Activated naive CD4-positive, alpha-beta T cell treated with anti-CD3 and anti-CD28 coated beads for 36 hours (primary cell): ENCODE measurements at regions of chr9 and their contacts with region 1.

Region 1: GRCh38 chr9:126704873-126705766 is 91.4 kb downstream of the LMX1B start:
- DNase-seq: peak; percentile 91
- H3K4me3 Mint-ChIP-seq: peak overlapping the region; percentile 58
- H3K27ac Mint-ChIP-seq: no peak overlapping the region
- H3K4me1 Mint-ChIP-seq: peaks cover 14% of the 10 kb centered on the region
- H3K27me3 Mint-ChIP-seq: peaks cover 17% of the 10 kb centered on the region

Region 2: DNA sequence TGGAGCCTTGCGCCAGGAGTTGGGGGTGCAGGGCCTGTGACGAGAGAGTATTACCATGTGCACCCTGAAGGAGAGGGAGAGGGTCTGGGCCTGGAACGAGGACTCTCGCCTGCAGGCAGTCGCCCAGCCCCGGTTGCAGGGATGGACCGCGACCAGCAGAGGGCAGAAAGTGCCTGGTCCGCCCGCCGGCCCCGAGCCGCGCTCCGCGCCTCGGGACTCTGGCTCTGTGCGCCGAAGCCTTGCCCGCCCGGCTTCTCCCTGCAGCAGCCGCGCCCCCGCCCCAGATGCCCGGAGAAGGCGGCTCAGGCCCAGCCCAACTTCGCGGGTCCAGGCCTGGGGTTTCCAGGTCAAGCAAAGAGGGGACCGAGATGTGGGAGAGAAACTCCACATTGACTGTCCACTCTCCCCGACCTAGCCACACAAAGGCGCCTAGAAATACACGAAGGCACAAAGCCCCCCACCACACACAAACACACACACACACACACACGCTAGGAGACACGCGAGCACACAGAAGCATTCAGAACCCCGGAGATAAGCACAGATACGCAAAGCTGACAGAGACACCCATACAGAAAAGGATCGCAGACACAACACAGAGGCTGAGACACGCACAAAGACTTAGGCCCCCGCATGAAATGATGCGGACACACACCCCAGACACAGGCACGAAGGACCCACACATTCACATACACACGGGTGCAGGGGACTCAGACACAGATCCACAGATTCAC is 93.4 kb before region 1 on chr9:
- CTCF ChIA-PET with region 1: interaction called, 5 read pairs
- intact Hi-C with region 1: loop called (anchors 1 kb)
- DNase-seq: peak; percentile 81
- H3K4me3 Mint-ChIP-seq: peak overlapping the region; percentile 5
- H3K27ac Mint-ChIP-seq: no peak overlapping the region
- H3K4me1 Mint-ChIP-seq: peaks cover 22% of the 10 kb centered on the region
- H3K27me3 Mint-ChIP-seq: peaks cover 66% of the 10 kb centered on the region

Region 3: DNA sequence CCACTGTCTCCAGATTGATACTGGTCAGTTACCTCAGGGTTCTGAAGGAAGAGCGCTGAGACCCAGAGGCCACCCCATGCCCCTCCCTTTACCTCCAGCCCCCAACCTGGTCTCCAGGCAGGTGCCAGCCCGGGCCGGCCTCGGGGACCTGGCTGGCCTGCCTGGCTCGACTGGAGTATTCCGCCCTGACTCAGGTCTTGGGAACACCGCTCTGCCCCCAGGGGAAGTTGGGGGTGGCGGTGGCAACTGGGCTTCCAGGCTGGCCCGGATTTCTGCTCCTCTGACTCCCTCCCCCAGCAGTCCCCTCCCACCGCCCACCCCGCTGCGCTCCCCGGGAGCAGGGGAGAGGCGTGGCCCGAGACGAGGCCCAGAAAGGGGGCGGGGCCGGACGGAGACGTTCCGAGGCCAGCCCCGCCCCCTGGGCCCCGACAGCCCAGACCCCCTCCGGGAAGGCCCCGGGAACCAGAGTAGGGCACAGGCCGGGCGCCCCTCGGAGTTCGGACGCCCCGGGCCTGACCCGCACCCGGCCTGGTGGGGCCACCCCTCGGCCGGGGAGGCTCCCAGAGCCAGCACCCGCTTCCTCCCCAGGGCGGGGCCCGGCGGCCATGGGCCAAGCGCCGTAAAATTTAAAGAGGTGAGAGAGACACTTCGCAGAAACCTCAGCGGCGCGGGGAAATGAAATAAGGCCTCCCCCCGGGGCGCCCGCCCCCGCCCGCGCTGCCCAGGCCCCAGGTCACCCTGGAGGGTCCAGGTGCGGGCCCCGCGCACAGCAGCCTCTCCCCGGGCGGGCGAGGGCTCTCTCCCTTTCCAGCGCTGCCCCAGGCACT is 17.3 kb after region 1 on chr9:
- CTCF ChIA-PET with region 1: interaction called, 27 read pairs
- intact Hi-C with region 1: loop called (anchors 1 kb)
- DNase-seq: peak; percentile 93
- H3K4me3 Mint-ChIP-seq: peak overlapping the region; percentile 84
- H3K27ac Mint-ChIP-seq: peak overlapping the region; percentile 82
- H3K4me1 Mint-ChIP-seq: peaks cover 35% of the 10 kb centered on the region
- H3K27me3 Mint-ChIP-seq: no peaks in the 10 kb centered on the region

Region 4: DNA sequence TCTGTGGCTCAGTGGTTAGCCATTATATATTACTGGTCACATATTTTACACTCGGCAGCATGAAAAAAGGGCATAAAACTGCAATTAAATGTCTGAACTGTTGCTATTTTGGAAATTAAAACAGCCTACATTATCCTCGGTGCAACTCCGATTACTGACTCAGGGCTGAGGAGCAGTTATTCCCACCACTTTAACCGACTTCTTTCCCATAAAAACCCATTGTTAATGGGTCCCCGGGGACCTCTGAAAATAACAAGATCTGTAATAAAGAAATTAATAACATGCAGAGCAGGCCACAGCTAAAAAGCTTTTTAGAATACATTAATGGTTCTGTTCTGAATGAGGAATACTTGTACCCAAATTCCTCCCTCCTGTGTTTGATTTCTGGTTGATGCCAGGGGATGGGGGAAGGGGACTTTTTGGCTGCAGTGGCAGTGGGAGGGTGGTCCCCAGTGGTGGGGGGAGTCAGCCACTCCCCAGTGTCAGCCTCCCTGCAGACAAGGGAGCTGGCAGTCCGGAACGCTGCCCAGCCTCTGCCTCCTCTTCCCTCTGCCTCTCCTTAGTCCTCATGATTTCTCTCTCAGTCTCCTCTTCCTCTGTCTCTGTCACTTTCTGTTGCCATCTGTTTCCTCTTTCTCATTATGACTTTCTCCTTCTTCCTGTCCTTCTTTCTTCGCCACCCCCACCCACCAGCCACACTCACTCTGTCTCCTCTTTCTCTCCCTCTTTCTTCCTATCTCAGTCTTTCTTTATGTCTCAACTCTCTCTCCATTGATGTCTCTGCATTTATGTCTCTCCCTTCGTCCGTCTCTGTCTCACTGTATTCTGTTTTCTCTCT is 40.7 kb after region 1 on chr9:
- CTCF ChIA-PET with region 1: interaction called, 28 read pairs
- intact Hi-C with region 1: loop called (anchors 5 kb)
- DNase-seq: peak; percentile 45
- H3K4me3 Mint-ChIP-seq: no peak overlapping the region
- H3K27ac Mint-ChIP-seq: peak overlapping the region; percentile 28
- H3K4me1 Mint-ChIP-seq: peaks cover 29% of the 10 kb centered on the region
- H3K27me3 Mint-ChIP-seq: no peaks in the 10 kb centered on the region

Region 5: DNA sequence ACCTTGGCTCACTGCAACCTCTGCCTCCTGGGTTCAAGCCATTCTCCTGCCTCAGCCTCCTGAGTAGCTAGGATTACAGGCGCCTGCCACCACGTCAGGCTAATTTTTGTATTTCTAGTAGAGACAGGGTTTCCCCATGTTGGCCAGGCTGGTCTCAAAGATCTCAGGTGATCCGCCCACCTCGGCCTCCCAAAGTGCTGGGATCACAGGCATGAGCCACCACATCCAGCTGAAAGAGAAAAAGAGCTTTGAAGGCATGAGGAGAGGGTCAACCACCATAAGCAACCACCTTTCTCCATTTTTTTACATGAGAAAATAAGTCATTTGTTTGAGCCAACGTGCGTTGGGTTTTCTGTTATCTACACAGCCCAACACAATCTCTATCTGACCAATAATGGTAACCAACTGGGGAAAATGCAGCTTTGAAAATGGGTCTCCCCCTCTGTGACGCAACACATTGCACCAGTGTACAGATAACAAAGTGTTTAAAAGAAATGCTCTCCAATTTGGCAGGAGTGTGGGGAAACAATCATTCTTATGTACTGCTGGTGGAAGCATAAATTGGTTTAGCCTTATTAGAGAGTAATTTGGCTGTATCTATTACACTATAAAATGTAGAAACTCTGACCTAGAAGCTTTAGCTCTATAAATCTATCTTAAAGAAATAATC is 53.9 kb after region 1 on chr9:
- CTCF ChIA-PET with region 1: interaction called, 13 read pairs
- intact Hi-C with region 1: no loop called
- DNase-seq: no peak
- H3K4me3 Mint-ChIP-seq: no peak overlapping the region
- H3K27ac Mint-ChIP-seq: no peak overlapping the region
- H3K4me1 Mint-ChIP-seq: no peaks in the 10 kb centered on the region
- H3K27me3 Mint-ChIP-seq: no peaks in the 10 kb centered on the region

Region 6: DNA sequence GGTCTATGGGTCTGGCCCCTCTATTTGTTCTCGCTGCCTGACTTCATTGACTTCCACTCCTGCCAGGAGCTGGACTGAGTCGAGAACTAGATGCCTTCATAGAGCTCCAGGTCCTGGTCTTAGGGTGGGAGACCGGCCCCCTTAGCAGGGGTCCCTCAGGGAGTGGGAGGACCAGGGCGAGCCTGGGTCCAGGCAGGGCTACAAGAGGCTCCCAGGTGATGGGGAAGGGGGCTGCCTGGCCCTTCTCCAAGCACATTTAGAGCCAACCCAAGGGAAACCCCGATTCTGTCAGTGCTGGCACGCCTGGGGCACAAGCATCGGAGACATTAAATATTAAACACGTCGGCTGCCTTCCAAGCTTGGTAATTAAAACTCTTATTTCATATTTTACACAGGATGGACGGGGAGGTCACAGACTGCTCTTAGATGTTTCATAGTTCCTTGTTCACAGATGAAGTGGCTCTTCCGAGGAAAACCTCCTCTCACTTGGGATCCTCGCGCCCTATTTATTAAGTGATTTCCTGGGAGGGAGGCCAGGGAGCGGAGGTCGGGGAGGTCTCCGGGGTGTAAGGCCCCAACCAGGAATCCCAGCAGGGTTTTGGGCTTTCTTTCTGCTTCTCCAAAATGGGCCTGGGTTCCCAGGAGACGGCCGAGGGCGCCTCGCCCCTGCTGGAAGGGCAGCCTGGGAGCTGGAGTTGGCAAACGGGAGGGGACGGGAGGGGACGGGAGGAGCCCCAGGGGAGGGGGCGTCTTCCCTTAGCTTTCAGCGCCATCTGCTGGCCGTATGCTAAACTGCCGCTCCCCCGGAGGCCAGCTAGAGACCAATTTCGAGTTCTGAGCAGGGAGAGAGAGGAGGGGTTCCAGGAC is 76.3 kb after region 1 on chr9:
- CTCF ChIA-PET with region 1: interaction called, 296 read pairs
- intact Hi-C with region 1: loop called (anchors 1 kb)
- DNase-seq: peak; percentile 87
- H3K4me3 Mint-ChIP-seq: no peak overlapping the region
- H3K27ac Mint-ChIP-seq: no peak overlapping the region
- H3K4me1 Mint-ChIP-seq: no peaks in the 10 kb centered on the region
- H3K27me3 Mint-ChIP-seq: peaks cover 13% of the 10 kb centered on the region

Region 7: DNA sequence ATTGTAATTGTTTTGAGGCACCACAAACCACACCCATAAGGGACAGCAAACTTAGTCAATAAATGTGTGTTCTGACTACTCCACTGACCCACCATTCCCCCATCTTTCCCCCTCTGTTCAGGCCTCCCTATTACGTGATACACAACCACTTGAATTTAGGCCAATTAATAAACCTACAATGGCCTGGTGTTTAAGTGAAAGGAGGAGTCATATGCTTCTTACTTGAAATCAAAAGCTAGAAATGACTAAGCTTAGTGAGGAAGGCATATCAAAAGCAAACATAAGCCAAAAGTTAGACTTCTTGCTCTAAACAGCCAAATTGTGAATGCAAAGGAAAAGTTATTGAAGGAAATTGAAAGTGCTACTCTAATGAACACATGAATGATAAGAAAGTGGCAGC is 114.4 kb after region 1 on chr9:
- CTCF ChIA-PET with region 1: interaction called, 10 read pairs
- intact Hi-C with region 1: no loop called
- DNase-seq: no peak
- H3K4me3 Mint-ChIP-seq: no peak overlapping the region
- H3K27ac Mint-ChIP-seq: peak overlapping the region; percentile 72
- H3K4me1 Mint-ChIP-seq: peaks cover 36% of the 10 kb centered on the region
- H3K27me3 Mint-ChIP-seq: no peaks in the 10 kb centered on the region